H1 (cell line): ENCODE measurements at regions of chr18 and their contacts with region 1.

Region 1: GRCh38 chr18:3129053-3129864 is 90.5 kb downstream of the MYOM1 start:
- DNase-seq: peak; percentile 72 to 89
- H3K4me3 ChIP-seq: no peak overlapping the region
- H3K27ac ChIP-seq: no peak overlapping the region
- H3K4me1 ChIP-seq: no peaks in the 10 kb centered on the region
- H3K27me3 ChIP-seq: no peaks in the 10 kb centered on the region
- CTCF ChIP-seq: peak; percentile 95 to 96 (median 96)
- EP300 ChIP-seq: peak in 1 of 2 experiments; percentile 70; a peak in 1 of 3 replicates
- POLR2A ChIP-seq: no peak
- RAD21 ChIP-seq: peak; percentile 74 to 81

Region 2: GRCh38 chr18:2939317-2939716 is 189.9 kb before region 1 on chr18:
- CTCF ChIA-PET with region 1: interaction called, 16 read pairs
- POLR2A ChIA-PET with region 1: no interaction called
- DNase-seq: no peak
- H3K4me3 ChIP-seq: no peak overlapping the region
- H3K27ac ChIP-seq: no peak overlapping the region
- H3K4me1 ChIP-seq: no peaks in the 10 kb centered on the region
- H3K27me3 ChIP-seq: no peaks in the 10 kb centered on the region
- CTCF ChIP-seq: no peak
- EP300 ChIP-seq: no peak
- POLR2A ChIP-seq: no peak
- RAD21 ChIP-seq: no peak

Region 3: GRCh38 chr18:3062798-3063680 is 66.2 kb before region 1 on chr18:
- CTCF ChIA-PET with region 1: interaction called, 14 read pairs
- POLR2A ChIA-PET with region 1: no interaction called
- DNase-seq: peak in 1 of 2 experiments; percentile 83
- H3K4me3 ChIP-seq: no peak overlapping the region
- H3K27ac ChIP-seq: no peak overlapping the region
- H3K4me1 ChIP-seq: no peaks in the 10 kb centered on the region
- H3K27me3 ChIP-seq: no peaks in the 10 kb centered on the region
- CTCF ChIP-seq: peak; percentile 73 to 83 (median 82)
- EP300 ChIP-seq: no peak
- POLR2A ChIP-seq: no peak
- RAD21 ChIP-seq: peak; percentile 64 to 79

Region 4: DNA sequence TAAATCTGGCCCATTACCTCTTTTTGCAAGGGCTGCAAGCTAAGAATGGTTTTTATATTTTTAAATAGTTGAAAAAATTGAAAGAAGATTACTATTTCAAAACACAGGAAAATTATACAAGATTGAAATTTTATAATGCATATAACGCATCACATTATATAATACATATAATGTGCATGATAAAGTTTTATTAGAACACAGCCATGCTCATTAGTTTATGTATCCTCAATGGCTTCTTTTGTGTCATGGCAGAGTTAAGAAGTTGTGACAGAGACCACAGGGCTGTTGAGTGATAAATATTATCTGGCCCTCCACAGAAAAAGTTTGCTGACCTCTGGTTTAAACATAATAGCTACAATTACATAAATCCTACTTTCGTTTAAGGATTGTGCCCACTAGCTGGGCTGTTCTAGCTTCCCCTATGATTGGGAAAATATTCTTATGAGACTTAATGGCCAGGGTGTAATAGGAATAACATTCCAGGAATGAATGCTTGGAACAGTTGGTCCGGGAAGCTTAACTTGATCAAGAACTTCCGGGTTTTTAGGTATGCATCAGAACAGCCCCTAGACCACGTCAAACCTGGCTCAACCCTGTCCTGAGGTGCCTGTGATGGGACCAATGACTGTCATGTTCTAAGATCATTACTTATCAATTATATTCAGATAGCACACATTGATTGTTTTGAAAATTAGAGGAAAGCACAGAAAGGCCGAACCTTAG is 17.6 kb before region 1 on chr18:
- CTCF ChIA-PET with region 1: interaction called, 17 read pairs
- POLR2A ChIA-PET with region 1: interaction called, 3 read pairs
- DNase-seq: no peak
- H3K4me3 ChIP-seq: no peak overlapping the region
- H3K27ac ChIP-seq: no peak overlapping the region
- H3K4me1 ChIP-seq: no peaks in the 10 kb centered on the region
- H3K27me3 ChIP-seq: peaks cover 3 to 17% (median 16%) of the 10 kb centered on the region in 4 experiments
- CTCF ChIP-seq: no peak
- EP300 ChIP-seq: no peak
- POLR2A ChIP-seq: no peak
- RAD21 ChIP-seq: no peak

Region 5: DNA sequence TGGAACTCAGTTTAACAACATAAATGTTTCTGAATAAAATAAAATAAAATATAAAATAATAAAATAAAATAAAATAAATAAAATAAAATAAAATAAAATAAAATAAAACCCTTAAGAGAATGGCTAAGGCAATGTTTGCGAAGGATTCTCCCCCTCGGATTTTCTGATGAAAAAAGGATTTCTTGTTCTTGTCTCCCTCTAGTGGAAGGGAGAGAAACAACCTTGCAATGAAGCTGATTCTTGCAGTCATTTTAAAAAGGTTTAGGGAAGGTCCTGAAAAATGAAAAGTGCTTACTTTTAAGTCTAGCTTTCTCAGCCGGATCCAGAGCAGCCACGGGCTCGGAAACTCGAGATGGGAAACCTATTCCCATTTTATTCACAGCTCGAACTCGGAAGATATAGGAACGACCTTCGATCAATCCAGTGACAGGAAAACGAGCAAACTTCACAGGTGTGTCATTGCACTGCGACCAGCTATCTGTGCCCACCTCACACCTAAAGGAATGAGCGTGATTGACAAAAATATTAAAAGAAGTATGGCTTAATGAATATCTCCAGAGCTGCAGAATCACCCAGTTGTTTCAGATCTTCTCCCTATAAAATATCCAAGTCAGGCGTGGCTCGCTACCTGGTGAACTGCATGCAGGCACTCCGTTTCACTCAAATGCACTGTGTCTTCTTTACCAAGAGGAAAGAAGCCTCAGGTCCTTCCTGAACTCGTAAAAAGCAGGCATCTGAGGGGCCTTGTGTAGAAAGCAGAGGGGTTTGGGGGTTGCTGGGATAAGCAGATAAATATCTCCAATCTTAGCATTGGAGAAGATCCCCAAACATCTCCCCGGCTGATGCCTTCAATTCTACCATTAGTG is 22.4 kb after region 1 on chr18:
- CTCF ChIA-PET with region 1: interaction called, 14 read pairs
- POLR2A ChIA-PET with region 1: no interaction called
- DNase-seq: no peak
- H3K4me3 ChIP-seq: no peak overlapping the region
- H3K27ac ChIP-seq: no peak overlapping the region
- H3K4me1 ChIP-seq: no peaks in the 10 kb centered on the region
- H3K27me3 ChIP-seq: no peaks in the 10 kb centered on the region; a peak in 1 of 7 replicates
- CTCF ChIP-seq: peak in 2 of 3 experiments; percentile 52 to 70; a peak in 2 of 4 replicates
- EP300 ChIP-seq: no peak
- POLR2A ChIP-seq: no peak
- RAD21 ChIP-seq: peak; percentile 69 to 71